ENCODE measurements at regions of chr11 and their contacts with region 1.

Region 1: DNA sequence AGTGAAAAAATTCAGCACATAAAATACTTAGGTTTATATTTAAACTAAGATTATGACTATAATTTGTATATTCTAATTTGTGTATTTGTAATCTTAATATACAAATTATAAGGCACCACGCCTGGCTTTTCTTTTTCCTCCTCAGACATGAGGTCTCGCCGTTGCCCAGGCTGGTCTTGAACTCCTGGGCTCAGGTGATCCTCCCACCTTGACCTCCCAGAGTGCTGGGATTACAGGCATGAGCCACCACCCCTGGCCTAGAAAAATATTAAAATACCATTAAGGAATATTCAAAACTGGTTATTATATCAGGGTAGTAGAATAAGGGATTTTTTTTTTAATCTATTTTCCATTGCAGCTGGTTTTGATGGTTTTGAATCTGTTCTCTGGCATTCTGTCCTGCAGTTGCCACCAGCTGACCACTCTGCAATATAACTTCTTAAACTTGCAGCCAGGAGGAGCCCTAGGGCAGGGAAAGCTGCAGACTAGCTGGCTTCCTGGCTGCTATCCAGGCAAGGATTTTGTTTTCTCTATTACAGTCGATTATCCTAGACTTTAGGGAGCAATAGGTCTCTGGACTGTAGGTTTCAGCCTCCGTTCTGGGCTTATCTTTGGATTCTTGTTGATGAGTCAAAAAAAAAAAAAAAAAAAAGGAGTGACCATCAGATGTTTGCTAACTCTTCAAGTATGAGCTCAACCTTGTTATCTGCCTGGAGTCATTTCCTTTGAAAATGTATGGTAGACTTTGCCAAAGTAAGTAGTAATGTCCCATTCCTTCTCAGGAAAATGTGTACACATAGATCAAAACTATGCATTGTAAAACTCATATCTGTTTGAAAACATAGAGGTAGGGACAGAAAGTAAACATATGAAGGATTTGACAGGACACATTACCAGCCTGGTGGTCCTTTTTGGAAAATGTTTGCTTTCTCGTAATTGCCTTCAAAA is 13.2 kb downstream of the POLA2 start:
- DNase-seq: peak; percentile 89
- H3K4me3 ChIP-seq: no peak overlapping the region
- H3K27me3 ChIP-seq: no peaks in the 10 kb centered on the region
- CTCF ChIP-seq: peak; percentile 74

Region 2: GRCh38 chr11:65194564-65194963 is 80.4 kb before region 1 on chr11:
- CTCF ChIA-PET with region 1: no interaction called
- POLR2A ChIA-PET with region 1: no interaction called
- DNase-seq: no peak
- H3K4me3 ChIP-seq: no peak overlapping the region
- H3K27me3 ChIP-seq: no peaks in the 10 kb centered on the region
- CTCF ChIP-seq: no peak

Region 3: DNA sequence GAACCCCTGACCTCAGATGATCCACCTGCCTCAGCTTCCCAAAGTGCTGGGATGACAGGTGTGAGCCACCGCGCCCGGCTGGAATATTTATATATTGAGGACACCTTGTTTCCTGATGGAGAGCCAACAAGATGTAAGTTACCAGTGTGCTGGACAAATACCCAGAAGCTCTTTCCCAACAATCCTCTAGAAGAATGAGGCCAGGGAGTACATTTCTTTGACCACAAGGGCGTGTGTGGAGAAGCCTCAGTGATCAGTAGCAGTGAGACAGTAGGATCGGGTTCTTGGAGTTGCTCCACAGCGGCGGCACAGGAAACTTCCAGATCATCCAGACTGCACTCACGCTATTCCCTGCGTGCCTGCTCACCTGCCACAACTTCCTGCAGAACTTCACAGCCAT is 23.5 kb before region 1 on chr11:
- CTCF ChIA-PET with region 1: no interaction called
- POLR2A ChIA-PET with region 1: no interaction called
- DNase-seq: no peak
- H3K4me3 ChIP-seq: no peak overlapping the region
- H3K27me3 ChIP-seq: no peaks in the 10 kb centered on the region; the same call in 1 of the 2 replicates
- CTCF ChIP-seq: peak; percentile 2; the same call in 1 of the 2 replicates

Region 4: DNA sequence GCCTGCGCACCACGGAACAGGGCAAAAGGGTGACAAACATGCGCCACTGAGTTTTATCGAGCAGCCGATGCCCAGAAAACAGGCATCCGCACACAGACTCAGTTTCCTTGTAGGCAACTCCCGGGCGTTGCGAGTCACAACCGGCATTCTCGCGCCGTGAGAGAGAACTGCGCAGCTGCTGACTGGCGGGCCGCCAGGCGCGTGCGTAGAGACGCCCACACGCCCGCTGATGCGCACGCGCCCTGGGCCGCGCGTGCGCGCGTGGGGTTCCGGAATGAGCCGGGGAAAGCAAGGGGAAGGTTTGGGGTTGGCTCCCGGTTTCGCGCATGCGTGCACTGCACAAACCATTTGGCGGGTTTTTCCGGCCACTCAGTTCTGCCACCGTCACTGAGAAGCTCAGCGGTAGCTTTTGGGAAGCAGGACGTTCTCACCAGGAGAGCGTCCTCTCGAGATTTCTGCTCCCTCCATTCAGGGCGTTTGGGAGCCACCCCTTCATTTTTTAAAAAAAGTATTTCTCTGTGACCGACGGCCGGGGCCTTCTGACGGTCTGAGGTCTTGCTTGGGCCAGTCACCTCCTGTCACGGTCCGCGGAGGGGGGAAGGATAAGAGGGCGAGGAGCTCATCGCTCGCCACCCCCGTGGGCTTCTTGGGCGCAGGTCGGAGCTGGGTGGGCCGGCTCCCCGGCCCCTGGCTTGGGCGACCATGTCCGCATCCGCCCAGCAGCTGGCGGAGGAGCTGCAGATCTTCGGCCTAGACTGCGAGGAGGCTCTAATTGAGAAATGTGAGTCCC is 13.2 kb before region 1 on chr11 and contains the start of gene POLA2:
- CTCF ChIA-PET with region 1: interaction called, 16 read pairs
- POLR2A ChIA-PET with region 1: no interaction called
- DNase-seq: peak; percentile 81
- H3K4me3 ChIP-seq: peak within 1 kb of the TSS; percentile 67
- H3K27me3 ChIP-seq: no peaks in the 10 kb centered on the region
- CTCF ChIP-seq: no peak
- polyA plus RNA-seq, gene POLA2: 11.8 and 14.5 TPM in 2 replicates

Region 5: DNA sequence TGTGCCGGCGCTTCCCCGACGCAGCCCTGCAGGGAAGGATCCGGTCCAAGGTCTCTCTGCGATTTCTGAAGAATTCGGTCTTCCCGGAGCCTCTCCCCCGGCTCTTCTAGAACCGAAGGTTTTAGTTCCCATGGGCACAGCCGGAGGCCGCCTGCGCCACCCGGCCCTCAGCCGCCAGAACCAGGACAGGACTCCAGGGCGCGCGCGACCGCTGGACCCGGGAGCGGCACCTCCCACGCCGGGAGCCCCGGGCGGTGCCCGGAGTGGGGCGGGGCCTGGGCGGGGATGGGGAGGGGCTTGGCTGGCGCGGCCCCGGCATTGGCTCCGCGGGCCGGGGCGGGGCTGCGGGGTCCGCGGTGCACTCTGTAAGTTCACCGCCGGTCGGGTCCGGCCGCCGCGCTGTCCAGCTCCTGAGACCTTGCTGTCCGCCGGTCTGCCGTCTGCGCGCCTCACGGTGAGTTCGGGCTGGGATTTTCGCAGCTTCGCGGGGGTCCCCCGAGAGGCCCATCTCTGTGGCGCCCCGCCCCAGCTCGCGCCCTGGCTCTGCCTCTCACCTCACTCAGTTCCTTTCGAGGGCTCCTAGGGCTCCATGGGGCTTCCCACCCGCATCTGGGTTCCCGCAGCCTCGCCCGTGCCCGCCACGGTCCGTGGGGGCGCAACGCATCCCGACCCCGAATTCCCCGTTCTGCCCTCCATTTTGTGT is 39.6 kb after region 1 on chr11 and contains the start of gene CDC42EP2:
- CTCF ChIA-PET with region 1: interaction called, 266 read pairs
- POLR2A ChIA-PET with region 1: interaction called, 40 read pairs
- DNase-seq: no peak
- H3K4me3 ChIP-seq: peak within 1 kb of the TSS; percentile 94
- H3K27me3 ChIP-seq: no peaks in the 10 kb centered on the region
- CTCF ChIP-seq: no peak
- polyA plus RNA-seq, gene CDC42EP2: 11.7 and 23.2 TPM in 2 replicates

Region 6: GRCh38 chr11:65329944-65330403 is 55.0 kb after region 1 on chr11:
- CTCF ChIA-PET with region 1: interaction called, 150 read pairs
- POLR2A ChIA-PET with region 1: interaction called, 34 read pairs
- DNase-seq: no peak
- H3K4me3 ChIP-seq: no peak overlapping the region
- H3K27me3 ChIP-seq: no peaks in the 10 kb centered on the region
- CTCF ChIP-seq: peak; percentile 71

Measured in BJ (cell line).